ENCODE measurements at regions of chr2 and their contacts with region 1.

Region 1: GRCh38 chr2:171811245-171811628 is 82.8 kb downstream of the SLC25A12 start:
- DNase-seq: peak; percentile 57
- ATAC-seq: peak; percentile 69
- H3K4me3 ChIP-seq: no peak overlapping the region
- H3K27ac ChIP-seq: no peak overlapping the region
- H3K4me1 ChIP-seq: peaks cover 6% of the 10 kb centered on the region; the same call in 1 of the 2 replicates
- H3K27me3 ChIP-seq: no peaks in the 10 kb centered on the region
- CTCF ChIP-seq: peak; percentile 56
- POLR2A ChIP-seq: no peak
- RAD21 ChIP-seq: peak; percentile 71

Region 2: DNA sequence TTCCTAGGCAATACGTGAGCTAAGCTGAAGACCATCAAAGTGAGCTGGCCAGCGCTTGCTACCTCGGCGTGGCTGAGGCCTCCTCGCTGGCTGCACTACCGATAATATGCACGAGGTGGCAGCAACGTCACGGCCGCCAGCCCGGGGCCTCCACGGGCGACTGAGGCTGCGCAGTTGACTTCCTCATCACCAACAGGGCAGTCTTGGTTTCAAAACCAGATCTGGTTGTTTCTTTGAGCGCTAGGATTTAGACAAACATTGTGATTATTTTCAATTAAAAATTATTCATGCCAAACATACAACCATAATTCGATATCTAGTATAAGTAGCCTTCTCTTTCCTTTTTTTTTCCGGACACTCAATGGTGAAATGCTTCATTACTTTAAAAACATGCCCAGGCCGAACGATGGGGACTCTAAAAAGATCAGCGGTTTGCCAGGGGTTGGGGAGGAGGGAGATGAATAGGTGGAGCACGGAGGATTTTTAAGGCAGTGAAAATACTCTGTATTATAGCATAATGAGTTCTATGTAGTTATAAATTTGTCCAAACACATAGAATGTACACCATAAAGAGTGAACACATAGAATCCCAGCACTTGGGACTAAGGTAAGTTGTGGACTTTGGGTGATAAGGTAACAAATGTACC is 237.0 kb before region 1 on chr2:
- CTCF ChIA-PET with region 1: no interaction called
- POLR2A ChIA-PET with region 1: no interaction called
- dilution Hi-C with region 1: no loop called
- in situ Hi-C with region 1: no loop called
- intact Hi-C with region 1: loop called (anchors 5 kb)
- DNase-seq: peak; percentile 68
- ATAC-seq: peak; percentile 100
- H3K4me3 ChIP-seq: no peak overlapping the region
- H3K27ac ChIP-seq: no peak overlapping the region
- H3K4me1 ChIP-seq: no peaks in the 10 kb centered on the region
- H3K27me3 ChIP-seq: 0 out of 2 replicates have a peak, but pooled peaks cover 5% of the 10 kb centered on the region
- CTCF ChIP-seq: peak; percentile 98
- POLR2A ChIP-seq: peak; percentile 66
- RAD21 ChIP-seq: peak; percentile 98

Region 3: DNA sequence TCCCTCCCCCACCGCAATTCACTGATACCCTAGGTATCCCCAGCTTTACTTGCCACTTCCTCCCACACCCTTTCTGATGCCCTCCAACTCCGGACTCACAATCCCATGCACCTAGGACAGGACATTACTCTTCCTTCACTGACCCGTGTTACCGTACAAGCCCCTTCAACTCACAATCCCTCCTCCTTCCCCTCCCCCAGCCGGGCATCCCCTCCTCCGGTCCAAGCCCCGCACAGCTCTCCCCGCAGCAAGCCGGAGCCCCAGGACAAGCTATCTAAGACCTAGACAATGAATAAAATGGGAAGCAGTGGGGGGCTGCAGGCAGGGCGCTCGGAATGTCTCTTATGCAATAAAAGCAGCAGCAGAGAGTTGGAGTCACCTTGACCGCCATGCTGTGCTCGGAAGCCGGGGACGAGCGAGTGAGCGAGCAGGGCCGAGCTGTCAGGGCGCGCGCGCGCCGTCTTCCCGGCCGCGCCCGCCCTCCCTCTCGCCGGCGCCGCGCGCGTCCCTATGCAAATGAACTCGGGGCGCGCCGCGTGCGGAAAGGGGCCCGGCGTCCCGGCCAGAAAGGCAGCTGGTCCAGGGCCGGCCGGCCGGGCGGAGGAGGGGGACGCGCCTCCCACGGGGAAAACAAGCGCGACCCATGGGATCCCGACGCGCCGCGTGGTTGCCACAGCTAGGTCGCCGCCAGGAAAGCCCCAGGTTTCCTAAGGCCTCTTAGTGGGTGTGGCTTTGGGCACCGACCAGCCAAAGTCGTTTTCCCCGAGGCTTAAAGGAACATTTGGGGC is 82.8 kb after region 1 on chr2 and contains the start of gene SLC25A12:
- CTCF ChIA-PET with region 1: no interaction called
- POLR2A ChIA-PET with region 1: no interaction called
- dilution Hi-C with region 1: no loop called
- in situ Hi-C with region 1: no loop called
- intact Hi-C with region 1: loop called (anchors 5 kb)
- DNase-seq: peak; percentile 73
- ATAC-seq: peak; percentile 97
- H3K4me3 ChIP-seq: peak within 1 kb of the TSS; percentile 85
- H3K27ac ChIP-seq: peak within 1 kb of the TSS; percentile 78
- H3K4me1 ChIP-seq: no peaks in the 10 kb centered on the region
- H3K27me3 ChIP-seq: no peaks in the 10 kb centered on the region
- CTCF ChIP-seq: no peak
- POLR2A ChIP-seq: peak; percentile 67
- RAD21 ChIP-seq: 0 out of 2 replicates have a peak, but pooled peaks have one; percentile 6
- total RNA-seq, gene SLC25A12: 17.6 and 23.6 TPM in 2 replicates

Region 4: DNA sequence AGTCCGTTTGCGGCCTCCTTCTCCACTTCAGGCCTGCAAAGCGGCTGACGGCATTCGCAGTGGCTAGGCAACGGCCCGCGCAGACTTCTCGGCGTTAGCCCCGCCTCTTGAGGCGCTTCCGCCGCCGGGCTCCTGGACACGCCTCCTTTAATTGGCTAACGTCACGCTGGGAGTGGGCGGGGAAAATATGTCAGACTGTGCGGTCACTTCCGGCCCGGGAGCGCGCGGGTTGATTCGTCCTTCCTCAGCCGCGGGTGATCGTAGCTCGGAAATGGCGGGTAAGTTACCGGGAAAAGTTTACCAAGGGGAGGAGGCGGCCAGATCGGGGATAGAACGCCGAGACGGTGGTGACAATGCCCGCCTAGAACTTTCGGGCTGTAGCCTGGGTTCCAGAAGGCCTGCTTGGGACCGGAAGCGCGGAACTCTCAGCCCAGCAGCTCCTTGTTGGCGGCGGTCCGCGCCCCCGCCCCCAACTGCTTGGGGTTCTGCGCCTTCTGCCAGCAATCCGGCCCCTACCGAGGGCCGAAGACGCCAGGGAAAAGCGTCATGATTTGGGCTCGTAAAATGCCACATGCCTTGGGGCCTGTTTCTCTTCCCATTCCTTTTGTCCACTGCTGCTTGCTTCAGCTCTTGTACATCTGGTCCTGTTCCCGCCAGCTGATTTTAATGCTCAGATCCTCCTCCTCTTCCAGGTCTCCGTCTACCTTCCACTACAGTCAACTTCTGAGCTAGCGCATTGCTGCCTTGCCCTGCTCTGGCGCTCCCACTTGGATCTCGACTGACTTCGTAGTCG is 111.2 kb after region 1 on chr2 and contains the start of gene HAT1:
- CTCF ChIA-PET with region 1: no interaction called
- POLR2A ChIA-PET with region 1: no interaction called
- dilution Hi-C with region 1: no loop called
- in situ Hi-C with region 1: no loop called
- intact Hi-C with region 1: loop called (anchors 5 kb)
- DNase-seq: peak; percentile 98
- ATAC-seq: peak; percentile 98
- H3K4me3 ChIP-seq: peak within 1 kb of the TSS; percentile 71
- H3K27ac ChIP-seq: peak within 1 kb of the TSS; percentile 65
- H3K4me1 ChIP-seq: no peaks in the 10 kb centered on the region
- H3K27me3 ChIP-seq: no peaks in the 10 kb centered on the region
- CTCF ChIP-seq: no peak
- POLR2A ChIP-seq: peak; percentile 74
- RAD21 ChIP-seq: no peak
- total RNA-seq, gene HAT1: 24.4 and 49.2 TPM in 2 replicates